ENCODE measurements at regions of chr1 and their contacts with region 1.

Region 1: GRCh38 chr1:3504151-3504821 is 49.8 kb downstream of the ARHGEF16 start:
- DNase-seq: peak; percentile 94
- H3K4me3 ChIP-seq: no peak overlapping the region
- H3K27ac ChIP-seq: peak overlapping the region; percentile 90
- H3K4me1 ChIP-seq: peaks cover 10% of the 10 kb centered on the region
- H3K27me3 ChIP-seq: no peaks in the 10 kb centered on the region
- CTCF ChIP-seq: no peak
- POLR2A ChIP-seq: no peak

Region 2: DNA sequence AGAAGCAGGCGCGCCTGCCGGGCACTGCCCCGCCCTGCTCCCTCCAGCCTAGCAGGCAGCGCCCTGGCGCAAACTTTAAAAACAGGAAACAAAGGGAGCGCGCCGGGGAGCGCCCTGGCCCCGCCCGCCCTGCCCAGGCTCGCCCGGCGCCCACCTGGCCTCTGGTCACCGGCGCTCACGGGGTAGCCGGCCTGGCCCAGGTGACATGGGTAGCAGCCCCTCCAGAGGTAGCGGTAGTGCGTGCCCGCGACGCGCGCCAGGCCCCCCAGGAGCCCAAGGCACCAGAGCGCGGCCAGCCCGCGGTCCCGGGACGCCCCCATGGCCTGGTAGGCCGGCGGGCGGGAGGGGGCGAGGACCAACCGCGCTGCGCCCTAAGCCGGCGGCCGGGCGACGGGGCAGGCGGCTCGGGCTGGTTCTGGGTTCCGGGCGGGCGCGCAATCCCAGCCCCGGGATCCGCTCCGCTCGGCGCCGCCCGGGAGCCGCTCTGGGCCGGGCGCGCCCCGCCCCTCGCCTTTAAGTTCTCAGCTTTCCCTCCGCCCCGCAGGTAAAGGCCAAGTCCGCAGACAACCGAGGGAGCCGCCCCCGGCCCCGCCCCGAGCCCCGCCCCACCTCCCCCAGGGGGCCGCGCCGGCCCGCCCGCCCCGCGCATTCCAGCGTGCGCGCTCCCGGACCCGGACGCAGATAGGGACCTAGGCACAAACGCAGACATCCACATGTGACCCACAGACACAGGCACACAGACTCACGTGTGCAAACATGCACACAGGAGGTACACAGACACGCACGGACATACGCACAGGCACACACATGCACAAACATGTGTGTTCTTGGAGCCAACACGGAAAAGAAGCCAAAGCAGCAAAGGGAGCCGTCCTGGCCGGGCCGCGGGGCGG is 26.9 kb after region 1 on chr1:
- CTCF ChIA-PET with region 1: interaction called, 7 read pairs
- POLR2A ChIA-PET with region 1: no interaction called
- dilution Hi-C with region 1: no loop called
- intact Hi-C with region 1: loop called (anchors 1 kb)
- DNase-seq: peak; percentile 54
- H3K4me3 ChIP-seq: peak overlapping the region; percentile 50 to 89 (median 77)
- H3K27ac ChIP-seq: peak overlapping the region; percentile 12
- H3K4me1 ChIP-seq: peaks cover 11% of the 10 kb centered on the region
- H3K27me3 ChIP-seq: no peaks in the 10 kb centered on the region
- CTCF ChIP-seq: no peak
- POLR2A ChIP-seq: peak; percentile 85

Region 3: DNA sequence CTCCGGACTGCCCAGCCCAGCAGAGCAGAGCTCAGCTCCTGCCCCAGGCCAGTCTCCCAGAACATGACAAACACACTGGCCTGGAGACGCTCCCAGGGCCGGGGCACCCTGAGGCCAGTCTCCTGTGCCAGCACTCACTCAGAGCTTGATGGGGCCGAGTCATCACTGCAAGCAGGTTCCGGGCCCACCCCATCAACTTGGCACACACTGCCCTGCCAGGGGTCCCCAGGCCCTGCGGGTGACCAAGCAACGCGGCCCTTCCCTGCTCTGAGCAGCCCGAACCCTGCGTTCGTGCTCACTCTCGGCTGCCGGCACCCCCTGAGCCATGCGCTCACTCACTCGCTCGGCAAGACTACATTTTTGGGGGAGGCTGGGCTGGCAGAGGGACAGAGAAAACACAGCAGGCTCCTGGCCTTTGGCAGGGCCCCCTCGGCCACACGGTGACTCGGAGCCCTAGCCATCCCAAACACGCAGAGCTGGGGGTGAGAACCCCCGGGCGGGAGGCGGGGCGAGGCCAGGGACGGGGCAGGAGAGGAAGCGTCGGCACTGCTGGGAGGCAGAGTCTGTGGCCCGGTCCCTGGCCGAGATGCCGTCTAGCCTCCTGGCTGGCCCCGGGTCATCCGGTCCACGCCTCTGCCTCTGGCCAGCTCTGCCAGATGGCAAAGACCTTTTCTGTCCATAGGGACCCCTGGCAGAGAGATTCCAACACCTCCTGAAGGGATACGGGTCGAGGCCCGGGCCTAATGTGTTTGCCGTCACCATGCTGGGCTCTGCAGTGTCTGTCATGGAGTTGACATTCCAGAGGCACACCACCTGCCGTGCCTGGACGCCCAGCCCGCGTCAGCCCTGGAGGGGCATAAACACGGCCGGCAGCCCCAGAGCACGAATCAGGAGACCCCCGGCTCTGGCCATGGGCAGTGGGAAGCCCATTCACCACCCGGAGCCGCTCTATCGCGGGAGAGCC is 39.1 kb after region 1 on chr1:
- CTCF ChIA-PET with region 1: interaction called, 4 read pairs
- POLR2A ChIA-PET with region 1: no interaction called
- dilution Hi-C with region 1: no loop called
- intact Hi-C with region 1: loop called (anchors 1 kb)
- DNase-seq: peak; percentile 29
- H3K4me3 ChIP-seq: no peak overlapping the region
- H3K27ac ChIP-seq: no peak overlapping the region
- H3K4me1 ChIP-seq: peaks cover 17% of the 10 kb centered on the region
- H3K27me3 ChIP-seq: no peaks in the 10 kb centered on the region
- CTCF ChIP-seq: no peak
- POLR2A ChIP-seq: no peak

Measured in endothelial cell of umbilical vein (primary cell).